Mammary epithelial cell (primary cell): ENCODE measurements at regions of chr2 and their contacts with region 1.

Region 1: GRCh38 chr2:177296040-177296439 is 31.5 kb upstream of the NFE2L2 start:
- DNase-seq: peak; percentile 19
- H3K4me3 ChIP-seq: no peak overlapping the region
- H3K27ac ChIP-seq: no peak overlapping the region
- H3K4me1 ChIP-seq: peaks cover 4% of the 10 kb centered on the region
- H3K27me3 ChIP-seq: no peaks in the 10 kb centered on the region
- CTCF ChIP-seq: peak; percentile 35 to 43

Region 2: DNA sequence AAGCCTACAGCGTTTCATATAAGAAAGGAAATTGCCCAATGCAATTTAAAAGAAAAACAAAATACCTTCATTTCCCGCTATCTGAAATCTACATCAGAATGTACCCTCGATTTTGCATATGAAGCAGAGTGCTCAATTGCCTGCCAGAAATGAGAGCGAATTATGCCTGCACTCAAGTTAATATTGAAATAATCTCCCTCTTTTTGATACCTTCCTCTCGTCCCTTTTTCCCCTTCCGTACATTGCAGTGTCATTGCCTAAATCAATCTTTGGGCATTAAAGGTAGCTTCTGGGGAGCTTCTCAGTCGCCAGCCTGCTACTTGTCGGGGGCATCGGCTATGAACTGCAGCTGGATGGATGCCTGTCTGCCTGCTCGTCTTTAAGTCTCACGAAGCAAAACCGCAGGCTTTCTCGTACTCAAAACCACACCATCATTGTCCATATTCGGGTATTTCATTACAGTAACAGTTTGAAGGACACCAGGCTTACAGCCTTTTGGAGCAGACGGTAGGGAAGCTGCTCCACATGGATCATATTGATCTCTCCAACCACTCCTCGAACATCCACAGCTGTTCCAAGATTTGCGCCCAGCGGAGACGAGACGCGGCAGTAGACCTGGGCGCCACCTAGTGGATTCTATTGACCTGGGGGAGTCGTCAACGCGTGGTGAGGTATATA is 147.4 kb before region 1 on chr2:
- CTCF ChIA-PET with region 1: no interaction called
- dilution Hi-C with region 1: no loop called
- in situ Hi-C with region 1: no loop called
- intact Hi-C with region 1: no loop called
- DNase-seq: peak; percentile 72
- H3K4me3 ChIP-seq: peak overlapping the region; percentile 22 to 48 (median 39)
- H3K27ac ChIP-seq: no peak overlapping the region
- H3K4me1 ChIP-seq: peaks cover 5% of the 10 kb centered on the region
- H3K27me3 ChIP-seq: no peaks in the 10 kb centered on the region
- CTCF ChIP-seq: peak; percentile 92 to 94

Region 3: GRCh38 chr2:177229448-177230242 is 66.4 kb before region 1 on chr2:
- CTCF ChIA-PET with region 1: no interaction called
- dilution Hi-C with region 1: no loop called
- in situ Hi-C with region 1: no loop called
- intact Hi-C with region 1: loop called (anchors 5 kb)
- DNase-seq: peak; percentile 81
- H3K4me3 ChIP-seq: no peak overlapping the region
- H3K27ac ChIP-seq: peak overlapping the region; percentile 54
- H3K4me1 ChIP-seq: peaks cover 6% of the 10 kb centered on the region
- H3K27me3 ChIP-seq: no peaks in the 10 kb centered on the region
- CTCF ChIP-seq: no peak

Region 4: GRCh38 chr2:177239932-177240630 is 56.0 kb before region 1 on chr2:
- CTCF ChIA-PET with region 1: no interaction called
- dilution Hi-C with region 1: no loop called
- in situ Hi-C with region 1: no loop called
- intact Hi-C with region 1: loop called (anchors 5 kb)
- DNase-seq: peak; percentile 52
- H3K4me3 ChIP-seq: no peak overlapping the region
- H3K27ac ChIP-seq: peak overlapping the region; percentile 92
- H3K4me1 ChIP-seq: peaks cover 45% of the 10 kb centered on the region
- H3K27me3 ChIP-seq: no peaks in the 10 kb centered on the region
- CTCF ChIP-seq: no peak